Caco-2 (cell line): ENCODE measurements at regions of chr10 and their contacts with region 1.

Region 1: GRCh38 chr10:100338434-100339036 is 8.5 kb upstream of the SCD start:
- DNase-seq: peak; percentile 67 to 83
- H3K4me3 ChIP-seq: no peak overlapping the region
- H3K4me3 Mint-ChIP-seq: no peak overlapping the region
- H3K27ac Mint-ChIP-seq: no peak overlapping the region
- H3K4me1 ChIP-seq: peaks cover 4% of the 10 kb centered on the region
- H3K4me1 Mint-ChIP-seq: peaks cover 22% of the 10 kb centered on the region
- H3K27me3 ChIP-seq: no peaks in the 10 kb centered on the region
- H3K27me3 Mint-ChIP-seq: peaks cover 2% of the 10 kb centered on the region
- CTCF ChIP-seq: peak; percentile 95 to 96

Region 2: GRCh38 chr10:99382181-99382580 is 956.4 kb before region 1 on chr10:
- CTCF ChIA-PET with region 1: interaction called, 12 read pairs
- POLR2A ChIA-PET with region 1: no interaction called
- intact Hi-C with region 1: no loop called
- DNase-seq: no peak
- H3K4me3 ChIP-seq: no peak overlapping the region
- H3K4me3 Mint-ChIP-seq: no peak overlapping the region
- H3K27ac Mint-ChIP-seq: no peak overlapping the region
- H3K4me1 ChIP-seq: no peaks in the 10 kb centered on the region
- H3K4me1 Mint-ChIP-seq: no peaks in the 10 kb centered on the region
- H3K27me3 ChIP-seq: no peaks in the 10 kb centered on the region; the same call in 1 of the 2 replicates
- H3K27me3 Mint-ChIP-seq: peaks cover 9% of the 10 kb centered on the region
- CTCF ChIP-seq: no peak

Region 3: GRCh38 chr10:100303724-100304319 is 34.7 kb before region 1 on chr10:
- CTCF ChIA-PET with region 1: interaction called, 3 read pairs
- POLR2A ChIA-PET with region 1: no interaction called
- intact Hi-C with region 1: loop called (anchors 2 kb)
- DNase-seq: no peak
- H3K4me3 ChIP-seq: no peak overlapping the region
- H3K4me3 Mint-ChIP-seq: no peak overlapping the region
- H3K27ac Mint-ChIP-seq: no peak overlapping the region
- H3K4me1 ChIP-seq: peaks cover 29% of the 10 kb centered on the region
- H3K4me1 Mint-ChIP-seq: peaks cover 27% of the 10 kb centered on the region
- H3K27me3 ChIP-seq: no peaks in the 10 kb centered on the region
- H3K27me3 Mint-ChIP-seq: no peaks in the 10 kb centered on the region
- CTCF ChIP-seq: peak; percentile 59 to 70

Region 4: GRCh38 chr10:100359529-100360150 is 21.1 kb after region 1 on chr10:
- CTCF ChIA-PET with region 1: interaction called, 7 read pairs
- POLR2A ChIA-PET with region 1: no interaction called
- intact Hi-C with region 1: loop called (anchors 1 kb)
- DNase-seq: peak; percentile 74 to 80
- H3K4me3 ChIP-seq: no peak overlapping the region
- H3K4me3 Mint-ChIP-seq: peak overlapping the region; percentile 46
- H3K27ac Mint-ChIP-seq: peak overlapping the region; percentile 39
- H3K4me1 ChIP-seq: peaks cover 67% of the 10 kb centered on the region
- H3K4me1 Mint-ChIP-seq: peaks cover 59% of the 10 kb centered on the region
- H3K27me3 ChIP-seq: no peaks in the 10 kb centered on the region
- H3K27me3 Mint-ChIP-seq: no peaks in the 10 kb centered on the region
- CTCF ChIP-seq: no peak

Region 5: DNA sequence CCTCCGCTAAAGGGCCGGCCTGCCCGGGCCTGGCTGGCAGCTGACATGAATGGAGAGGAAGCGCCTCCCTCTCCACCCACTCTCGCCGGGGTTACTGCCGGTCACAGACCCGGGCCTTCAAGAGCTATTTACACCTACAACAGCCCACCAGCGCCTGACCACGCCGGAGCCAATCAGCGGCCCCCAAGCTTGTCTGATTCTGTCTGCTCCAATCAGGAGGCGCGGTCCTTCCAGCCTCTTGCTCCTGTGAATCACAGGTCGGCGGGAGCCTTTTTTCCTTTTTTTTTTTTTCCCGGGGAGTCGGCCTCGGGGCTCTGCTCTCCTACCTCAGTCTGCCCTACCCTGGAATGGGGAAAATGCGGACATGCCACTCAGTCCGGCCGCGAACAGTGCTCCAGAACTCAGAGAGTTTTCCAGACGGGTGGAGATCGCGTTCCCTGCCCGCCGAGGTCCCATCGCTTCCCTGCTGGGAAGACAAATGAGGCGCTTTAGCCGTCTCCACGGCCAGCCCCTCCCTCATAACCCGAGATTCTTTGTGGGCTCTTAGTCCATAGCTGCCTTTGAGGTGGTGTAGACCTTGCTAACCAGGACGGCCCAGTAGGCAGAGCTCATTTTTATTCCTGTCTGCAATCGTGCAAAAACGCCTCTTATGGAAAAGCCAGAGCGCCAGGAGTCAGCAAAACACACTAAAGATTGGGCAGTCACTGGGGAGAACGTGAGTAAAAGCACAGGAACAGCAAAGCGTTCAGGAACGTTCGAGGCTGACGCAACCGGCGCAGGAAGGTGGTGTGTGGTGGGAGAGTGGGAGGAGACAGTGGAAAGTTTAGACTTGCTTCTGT is 35.0 kb after region 1 on chr10:
- CTCF ChIA-PET with region 1: interaction called, 8 read pairs
- POLR2A ChIA-PET with region 1: interaction called, 4 read pairs
- intact Hi-C with region 1: loop called (anchors 1 kb)
- DNase-seq: peak; percentile 98 to 99
- H3K4me3 ChIP-seq: peak overlapping the region; percentile 48
- H3K4me3 Mint-ChIP-seq: no peak overlapping the region
- H3K27ac Mint-ChIP-seq: no peak overlapping the region
- H3K4me1 ChIP-seq: peaks cover 38% of the 10 kb centered on the region
- H3K4me1 Mint-ChIP-seq: peaks cover 20% of the 10 kb centered on the region
- H3K27me3 ChIP-seq: no peaks in the 10 kb centered on the region
- H3K27me3 Mint-ChIP-seq: no peaks in the 10 kb centered on the region
- CTCF ChIP-seq: no peak

Region 6: DNA sequence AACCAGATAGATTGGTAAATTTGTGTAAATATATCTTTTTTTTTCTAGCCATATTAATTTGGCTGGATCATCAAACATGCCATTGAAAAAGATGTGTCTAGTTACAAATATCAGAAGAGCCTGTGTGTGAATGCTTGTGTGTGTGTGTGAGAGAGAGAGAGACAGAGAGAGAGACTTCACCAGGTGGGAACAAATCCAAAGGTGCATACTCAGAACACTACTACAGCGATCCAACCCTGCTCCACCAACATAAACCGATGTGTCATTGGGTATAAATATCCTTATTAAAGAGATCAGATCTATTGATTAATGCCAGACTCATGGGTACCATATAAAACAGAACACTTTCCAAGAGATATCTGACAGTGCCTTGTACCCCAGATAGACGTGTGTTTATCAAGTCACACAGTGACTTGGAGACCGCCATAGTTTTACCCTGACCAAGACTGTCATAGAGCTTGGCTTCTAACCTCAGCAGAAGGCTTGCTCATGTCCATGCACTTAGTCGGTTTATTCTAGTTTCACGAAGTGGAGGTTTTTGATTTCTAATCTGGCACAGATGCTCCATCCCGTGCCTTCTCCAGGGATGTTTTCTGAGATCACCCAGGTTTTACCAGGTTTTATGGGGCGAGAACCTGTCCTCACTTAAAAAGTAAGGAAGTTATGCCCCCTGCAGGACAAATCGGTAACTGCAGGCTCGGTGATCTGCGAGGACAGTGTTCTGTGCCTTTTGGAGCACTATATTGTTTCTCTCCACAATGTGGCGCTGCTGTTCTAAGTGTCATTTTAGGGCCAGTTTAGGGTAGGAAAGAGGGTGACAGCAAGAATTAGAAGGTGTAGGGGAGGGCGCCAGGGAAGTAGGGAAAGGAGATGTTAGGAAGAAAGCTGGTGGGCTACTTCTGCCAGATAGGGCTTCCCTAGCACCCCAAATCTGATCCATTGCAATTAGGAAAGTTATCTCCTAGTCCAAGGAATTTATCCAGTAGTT is 95.0 kb after region 1 on chr10:
- CTCF ChIA-PET with region 1: interaction called, 8 read pairs
- POLR2A ChIA-PET with region 1: no interaction called
- intact Hi-C with region 1: loop called (anchors 1 kb)
- DNase-seq: peak; percentile 95
- H3K4me3 ChIP-seq: no peak overlapping the region
- H3K4me3 Mint-ChIP-seq: no peak overlapping the region
- H3K27ac Mint-ChIP-seq: no peak overlapping the region
- H3K4me1 ChIP-seq: no peaks in the 10 kb centered on the region
- H3K4me1 Mint-ChIP-seq: no peaks in the 10 kb centered on the region
- H3K27me3 ChIP-seq: no peaks in the 10 kb centered on the region
- H3K27me3 Mint-ChIP-seq: no peaks in the 10 kb centered on the region
- CTCF ChIP-seq: peak; percentile 96 to 97

Region 7: DNA sequence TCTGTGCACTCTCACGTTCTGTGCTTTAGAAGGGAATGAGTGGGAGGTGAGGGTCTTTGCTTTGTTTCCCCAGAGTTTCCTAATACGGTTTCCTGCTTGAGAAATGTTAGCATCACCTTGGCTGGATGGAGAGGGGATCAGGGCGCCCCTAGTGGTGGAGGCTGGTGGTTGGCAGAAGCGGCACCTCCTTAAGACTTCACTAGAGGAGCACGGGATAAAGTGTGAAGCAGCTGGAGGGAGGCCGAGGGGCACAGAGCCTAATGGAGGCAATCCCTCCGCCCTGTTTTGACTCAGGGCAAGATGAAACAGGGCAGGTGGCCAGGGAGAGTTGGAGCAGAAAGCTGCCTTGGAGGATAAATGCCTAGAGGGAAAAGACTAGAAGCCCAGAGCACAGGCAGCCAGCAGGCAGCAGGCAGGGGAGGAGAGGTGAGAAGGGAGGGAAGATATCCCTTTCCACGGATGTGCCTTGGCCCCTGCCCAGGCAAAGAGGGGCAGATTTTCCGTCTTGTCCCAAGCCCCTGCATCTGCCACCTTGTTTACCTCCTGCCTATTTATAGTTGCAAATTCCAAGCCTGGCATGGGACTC is 959.5 kb after region 1 on chr10:
- CTCF ChIA-PET with region 1: no interaction called
- POLR2A ChIA-PET with region 1: no interaction called
- intact Hi-C with region 1: no loop called
- DNase-seq: peak; percentile 66 to 82
- H3K4me3 ChIP-seq: no peak overlapping the region
- H3K4me3 Mint-ChIP-seq: no peak overlapping the region
- H3K27ac Mint-ChIP-seq: no peak overlapping the region
- H3K4me1 ChIP-seq: no peaks in the 10 kb centered on the region
- H3K4me1 Mint-ChIP-seq: peaks cover 6% of the 10 kb centered on the region
- H3K27me3 ChIP-seq: peaks cover 3% of the 10 kb centered on the region
- H3K27me3 Mint-ChIP-seq: peaks cover 32% of the 10 kb centered on the region
- CTCF ChIP-seq: peak; percentile 88 to 95